ENCODE measurements at regions of chr22 and their contacts with region 1.

Region 1: GRCh38 chr22:20550821-20551744 is 43.7 kb downstream of the MED15 start:
- DNase-seq: peak in 1 of 2 donors; percentile 77
- H3K4me3 ChIP-seq: peak overlapping the region in 1 of 4 donors; percentile 6
- H3K27ac ChIP-seq: peak overlapping the region; percentile 83 to 90 (median 88)
- H3K4me1 ChIP-seq: peaks cover 56 to 87% (median 67%) of the 10 kb centered on the region in 4 donors
- H3K27me3 ChIP-seq: no peaks in the 10 kb centered on the region
- CTCF ChIP-seq: no peak
- EP300 ChIP-seq: no peak
- POLR2A ChIP-seq: no peak

Region 2: GRCh38 chr22:20507253-20508066 is 43.6 kb before region 1 on chr22 and contains the start of gene MED15:
- intact Hi-C with region 1: loop called (anchors 10 kb)
- DNase-seq: peak; percentile 91 to 96
- H3K4me3 ChIP-seq: peak within 1 kb of the TSS; percentile 70 to 84 (median 78)
- H3K27ac ChIP-seq: peak within 1 kb of the TSS; percentile 87 to 99 (median 98)
- H3K4me1 ChIP-seq: peaks cover 38 to 59% (median 51%) of the 10 kb centered on the region in 4 donors
- H3K27me3 ChIP-seq: no peaks in the 10 kb centered on the region
- CTCF ChIP-seq: no peak
- EP300 ChIP-seq: no peak
- POLR2A ChIP-seq: peak in 1 of 4 donors; percentile 33
- total RNA-seq, gene MED15: 28.3 to 289 (median 135) TPM

Region 3: DNA sequence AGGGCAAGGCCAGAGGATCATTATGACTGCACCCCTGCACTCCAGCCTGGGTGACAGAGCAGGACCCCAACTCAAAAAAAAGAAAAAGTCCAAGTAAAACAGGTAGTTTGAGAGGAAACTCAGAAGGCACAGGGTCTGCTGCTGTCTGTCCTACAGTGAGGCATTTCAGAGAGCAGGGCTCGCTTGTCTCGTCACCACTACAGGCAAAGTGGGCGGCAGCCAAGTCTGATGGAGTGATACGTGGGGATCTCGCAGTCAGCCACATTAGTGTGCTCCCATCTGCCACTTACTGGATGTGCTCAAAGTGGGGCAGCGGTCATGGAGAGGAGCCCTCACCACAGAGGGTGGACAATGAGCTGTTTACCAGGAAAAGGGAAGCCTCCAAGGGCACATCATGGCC is 265.5 kb after region 1 on chr22:
- intact Hi-C with region 1: no loop called
- DNase-seq: no peak
- H3K4me3 ChIP-seq: no peak overlapping the region
- H3K27ac ChIP-seq: no peak overlapping the region
- H3K4me1 ChIP-seq: no peaks in the 10 kb centered on the region
- H3K27me3 ChIP-seq: no peaks in the 10 kb centered on the region
- CTCF ChIP-seq: no peak
- EP300 ChIP-seq: no peak
- POLR2A ChIP-seq: no peak